HEK293 (cell line): ENCODE measurements at regions of chr22 and their contacts with region 1.

Region 1: DNA sequence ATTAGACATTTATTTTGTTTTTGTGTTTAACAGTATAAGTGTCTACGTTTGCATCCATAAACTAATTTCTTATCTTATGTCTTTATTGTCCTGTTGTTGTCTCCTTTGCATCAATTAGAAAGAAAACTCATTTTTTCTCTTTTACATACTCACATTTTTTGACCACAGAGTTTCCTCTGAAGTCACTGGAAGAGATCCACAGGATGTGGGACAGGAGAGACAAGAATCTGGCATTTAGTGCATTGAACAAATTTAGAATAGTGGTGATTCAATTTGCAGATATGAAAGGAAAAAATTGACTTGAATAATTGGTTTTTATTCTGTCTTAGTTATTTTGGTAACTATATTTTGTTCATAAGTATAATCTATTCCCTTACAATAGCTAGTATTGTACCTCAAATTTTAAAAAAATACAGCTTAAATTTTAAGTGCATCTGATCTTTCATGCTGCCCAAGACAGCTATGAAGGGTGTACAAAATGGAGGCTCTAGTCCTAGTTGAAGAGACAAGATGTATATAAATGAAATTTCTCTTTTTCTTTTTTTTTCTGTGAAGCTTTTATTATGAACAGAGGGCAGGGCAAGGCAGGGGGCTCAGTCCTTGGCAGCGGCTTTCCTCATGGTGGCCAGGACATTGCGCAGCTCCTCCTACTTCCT is 24.4 kb downstream of the HORMAD2 start:
- H3K4me3 ChIP-seq: no peak overlapping the region
- H3K27ac ChIP-seq: no peak overlapping the region
- H3K4me1 ChIP-seq: no peaks in the 10 kb centered on the region
- CTCF ChIP-seq: no peak

Region 2: GRCh38 chr22:30116362-30117117 is 11.9 kb after region 1 on chr22:
- CTCF ChIA-PET with region 1: interaction called, 77 read pairs
- POLR2A ChIA-PET with region 1: no interaction called
- H3K4me3 ChIP-seq: no peak overlapping the region
- H3K27ac ChIP-seq: no peak overlapping the region
- H3K4me1 ChIP-seq: no peaks in the 10 kb centered on the region; the same call in 1 of the 2 replicates
- CTCF ChIP-seq: no peak

Region 3: GRCh38 chr22:30253205-30253852 is 148.7 kb after region 1 on chr22:
- CTCF ChIA-PET with region 1: interaction called, 16 read pairs
- POLR2A ChIA-PET with region 1: interaction called, 4 read pairs
- H3K4me3 ChIP-seq: no peak overlapping the region
- H3K27ac ChIP-seq: no peak overlapping the region; the same call in 1 of the 2 replicates
- H3K4me1 ChIP-seq: no peaks in the 10 kb centered on the region; the same call in 1 of the 2 replicates
- CTCF ChIP-seq: no peak

Region 4: GRCh38 chr22:30262917-30263741 is 158.5 kb after region 1 on chr22:
- CTCF ChIA-PET with region 1: interaction called, 16 read pairs
- POLR2A ChIA-PET with region 1: no interaction called
- H3K4me3 ChIP-seq: no peak overlapping the region
- H3K27ac ChIP-seq: no peak overlapping the region
- H3K4me1 ChIP-seq: no peaks in the 10 kb centered on the region
- CTCF ChIP-seq: peak; percentile 67

Region 5: DNA sequence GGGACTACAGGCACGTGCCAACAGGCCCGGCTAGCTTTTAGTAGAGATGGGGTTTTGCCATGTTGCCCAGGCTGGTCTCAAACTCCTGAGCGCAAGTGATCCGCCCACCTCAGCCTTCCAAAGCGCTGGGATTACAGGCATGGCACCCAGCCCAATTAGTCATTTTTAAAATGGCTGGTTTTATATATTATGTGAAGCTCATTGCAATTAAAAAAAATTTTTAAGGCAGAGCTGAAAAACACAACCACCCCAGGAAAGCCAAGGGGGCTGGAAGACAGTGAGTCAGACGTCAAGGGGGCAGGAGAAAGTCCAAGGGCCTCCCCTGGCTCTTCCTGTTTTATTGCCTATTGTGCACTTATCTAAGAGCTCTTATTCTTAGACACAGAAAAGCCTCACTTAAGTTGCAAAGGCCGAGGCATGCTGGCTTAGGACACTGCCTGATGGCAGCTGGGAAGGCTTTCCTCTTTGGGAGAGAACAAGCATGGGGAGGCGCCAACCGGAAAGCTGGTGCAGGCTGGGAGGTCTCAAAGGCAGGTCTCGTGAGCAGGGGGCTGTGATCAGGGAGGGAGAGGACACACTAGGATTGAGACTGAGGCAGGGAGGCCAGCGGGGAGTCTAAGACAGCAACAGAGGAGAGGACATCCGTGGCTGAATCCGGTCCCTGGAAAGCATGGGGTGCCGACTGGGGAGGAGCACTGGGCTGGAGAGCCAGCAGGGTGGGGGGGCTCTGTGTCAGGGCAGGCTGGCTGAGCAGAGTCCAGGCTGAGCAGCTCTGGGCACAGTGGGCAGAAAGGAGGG is 173.1 kb after region 1 on chr22:
- CTCF ChIA-PET with region 1: interaction called, 10 read pairs
- POLR2A ChIA-PET with region 1: no interaction called
- H3K4me3 ChIP-seq: no peak overlapping the region
- H3K27ac ChIP-seq: no peak overlapping the region
- H3K4me1 ChIP-seq: no peaks in the 10 kb centered on the region
- CTCF ChIP-seq: no peak